ENCODE measurements at regions of chr7 and their contacts with region 1.

Region 1: DNA sequence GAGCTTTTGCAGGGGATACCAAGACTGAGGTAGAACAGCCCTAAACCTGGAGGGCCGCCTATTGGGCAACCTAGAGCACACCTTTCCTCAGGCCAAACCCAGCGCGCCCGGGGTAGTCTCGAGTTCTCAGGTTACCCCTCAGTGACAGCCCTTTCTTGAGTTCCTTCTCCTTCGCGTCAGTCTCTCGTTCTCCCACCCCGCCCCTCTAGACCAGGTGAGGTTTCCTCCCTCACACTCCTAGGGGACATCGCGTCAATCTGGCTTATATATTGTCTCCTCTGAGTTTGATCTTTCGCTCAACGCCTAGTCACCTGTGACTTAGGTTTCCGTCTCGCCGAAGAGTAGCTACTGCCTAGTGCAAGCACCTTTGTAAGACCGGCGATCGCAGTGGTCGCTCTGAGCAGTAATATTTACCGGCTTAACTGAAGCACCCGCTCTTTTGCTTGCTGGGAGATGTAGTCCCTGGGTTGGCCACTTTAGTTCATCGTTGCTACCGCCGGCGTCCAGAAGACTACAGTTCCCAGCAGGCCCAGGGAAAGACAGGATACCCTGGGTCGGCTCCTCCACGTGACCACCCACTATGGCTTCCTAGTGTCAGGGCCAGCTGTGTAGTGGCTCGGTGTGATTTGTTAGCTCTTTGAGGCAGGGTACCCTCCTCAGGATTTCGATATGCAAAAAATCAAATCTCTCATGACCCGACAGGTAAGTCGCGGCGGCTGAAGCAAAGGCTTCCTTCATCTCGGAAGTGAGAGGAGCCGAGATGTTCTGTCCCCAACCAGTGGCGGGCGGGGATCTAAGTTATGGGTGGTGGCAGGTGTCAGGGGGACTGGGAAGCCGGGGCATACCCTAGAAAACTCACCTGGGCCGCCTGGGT is at the start of gene VPS50:
- DNase-seq: peak; percentile 96 to 97
- H3K4me3 ChIP-seq: peak within 1 kb of the TSS; percentile 51
- H3K4me3 Mint-ChIP-seq: peak within 1 kb of the TSS; percentile 96
- H3K27ac Mint-ChIP-seq: peak within 1 kb of the TSS; percentile 97
- H3K4me1 ChIP-seq: peaks cover 15% of the 10 kb centered on the region; the same call in 1 of the 2 replicates
- H3K4me1 Mint-ChIP-seq: no peaks in the 10 kb centered on the region
- H3K27me3 ChIP-seq: no peaks in the 10 kb centered on the region
- H3K27me3 Mint-ChIP-seq: no peaks in the 10 kb centered on the region
- CTCF ChIP-seq: peak in 1 of 2 experiments; percentile 32
- total RNA-seq, gene VPS50: 38.7 and 40.3 TPM in 2 replicates

Region 2: DNA sequence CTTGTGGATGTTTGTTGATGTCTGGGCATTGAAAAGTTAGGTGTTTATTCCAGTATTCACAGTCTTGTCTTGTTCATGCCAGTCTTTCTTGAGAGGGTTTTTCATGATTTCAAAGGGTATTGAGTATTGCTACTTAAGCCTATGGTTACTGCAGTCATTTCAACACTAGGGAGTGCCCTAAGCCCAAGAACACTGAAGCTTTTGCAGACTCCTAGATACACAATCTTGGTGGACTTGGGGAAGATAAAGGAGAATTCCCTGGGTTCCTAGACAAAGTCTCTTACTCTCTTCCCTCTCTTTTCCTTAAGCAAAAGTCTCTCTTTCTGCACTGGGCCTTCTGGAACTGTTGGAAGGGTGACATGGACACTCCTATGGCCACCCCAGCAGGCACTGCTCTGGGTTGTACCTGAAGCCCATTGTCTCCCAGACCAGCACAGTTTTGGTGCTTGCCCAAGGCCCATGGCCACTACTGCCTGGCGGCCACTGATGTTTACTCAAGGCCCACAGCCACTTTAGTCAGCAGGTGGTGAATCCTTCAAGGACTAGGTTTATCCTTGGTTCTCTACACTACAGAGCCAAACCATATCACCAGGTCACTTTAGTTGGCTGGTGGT is 139.2 kb before region 1 on chr7:
- CTCF ChIA-PET with region 1: interaction called, 3 read pairs
- POLR2A ChIA-PET with region 1: no interaction called
- intact Hi-C with region 1: loop called (anchors 1 kb)
- DNase-seq: peak in 1 of 2 experiments; percentile 27
- H3K4me3 ChIP-seq: no peak overlapping the region
- H3K4me3 Mint-ChIP-seq: no peak overlapping the region
- H3K27ac Mint-ChIP-seq: no peak overlapping the region
- H3K4me1 ChIP-seq: peaks cover 6% of the 10 kb centered on the region; the same call in 1 of the 2 replicates
- H3K4me1 Mint-ChIP-seq: peaks cover 4% of the 10 kb centered on the region
- H3K27me3 ChIP-seq: no peaks in the 10 kb centered on the region
- H3K27me3 Mint-ChIP-seq: peaks cover 16% of the 10 kb centered on the region
- CTCF ChIP-seq: peak; percentile 27 to 38

Region 3: GRCh38 chr7:93212881-93213280 is 19.2 kb before region 1 on chr7:
- CTCF ChIA-PET with region 1: no interaction called
- POLR2A ChIA-PET with region 1: no interaction called
- intact Hi-C with region 1: loop called (anchors 1 kb)
- DNase-seq: no peak
- H3K4me3 ChIP-seq: no peak overlapping the region
- H3K4me3 Mint-ChIP-seq: no peak overlapping the region
- H3K27ac Mint-ChIP-seq: no peak overlapping the region
- H3K4me1 ChIP-seq: peaks cover 34% of the 10 kb centered on the region
- H3K4me1 Mint-ChIP-seq: peaks cover 21% of the 10 kb centered on the region
- H3K27me3 ChIP-seq: no peaks in the 10 kb centered on the region
- H3K27me3 Mint-ChIP-seq: no peaks in the 10 kb centered on the region
- CTCF ChIP-seq: no peak

Region 4: GRCh38 chr7:93461350-93461749 is 229.3 kb after region 1 on chr7:
- CTCF ChIA-PET with region 1: no interaction called
- POLR2A ChIA-PET with region 1: no interaction called
- intact Hi-C with region 1: no loop called
- DNase-seq: no peak
- H3K4me3 ChIP-seq: no peak overlapping the region
- H3K4me3 Mint-ChIP-seq: no peak overlapping the region
- H3K27ac Mint-ChIP-seq: no peak overlapping the region
- H3K4me1 ChIP-seq: no peaks in the 10 kb centered on the region
- H3K4me1 Mint-ChIP-seq: no peaks in the 10 kb centered on the region
- H3K27me3 ChIP-seq: no peaks in the 10 kb centered on the region
- H3K27me3 Mint-ChIP-seq: peaks cover 8% of the 10 kb centered on the region
- CTCF ChIP-seq: peak in 1 of 2 experiments; percentile 24

Measured in Caco-2 (cell line).